ENCODE measurements at regions of chr7 and their contacts with region 1.

Region 1: GRCh38 chr7:3927446-3928110 is 626.5 kb downstream of the SDK1 start:
- DNase-seq: no peak
- H3K4me3 ChIP-seq: no peak overlapping the region
- H3K27ac ChIP-seq: no peak overlapping the region
- H3K4me1 ChIP-seq: no peaks in the 10 kb centered on the region
- H3K27me3 ChIP-seq: no peaks in the 10 kb centered on the region
- CTCF ChIP-seq: no peak
- POLR2A ChIP-seq: no peak

Region 2: GRCh38 chr7:3897438-3898385 is 29.9 kb before region 1 on chr7:
- intact Hi-C with region 1: loop called (anchors 2 kb)
- DNase-seq: no peak
- H3K4me3 ChIP-seq: no peak overlapping the region
- H3K27ac ChIP-seq: no peak overlapping the region
- H3K4me1 ChIP-seq: no peaks in the 10 kb centered on the region
- H3K27me3 ChIP-seq: no peaks in the 10 kb centered on the region
- CTCF ChIP-seq: peak; percentile 57 to 71 (median 63)
- POLR2A ChIP-seq: no peak

Region 3: DNA sequence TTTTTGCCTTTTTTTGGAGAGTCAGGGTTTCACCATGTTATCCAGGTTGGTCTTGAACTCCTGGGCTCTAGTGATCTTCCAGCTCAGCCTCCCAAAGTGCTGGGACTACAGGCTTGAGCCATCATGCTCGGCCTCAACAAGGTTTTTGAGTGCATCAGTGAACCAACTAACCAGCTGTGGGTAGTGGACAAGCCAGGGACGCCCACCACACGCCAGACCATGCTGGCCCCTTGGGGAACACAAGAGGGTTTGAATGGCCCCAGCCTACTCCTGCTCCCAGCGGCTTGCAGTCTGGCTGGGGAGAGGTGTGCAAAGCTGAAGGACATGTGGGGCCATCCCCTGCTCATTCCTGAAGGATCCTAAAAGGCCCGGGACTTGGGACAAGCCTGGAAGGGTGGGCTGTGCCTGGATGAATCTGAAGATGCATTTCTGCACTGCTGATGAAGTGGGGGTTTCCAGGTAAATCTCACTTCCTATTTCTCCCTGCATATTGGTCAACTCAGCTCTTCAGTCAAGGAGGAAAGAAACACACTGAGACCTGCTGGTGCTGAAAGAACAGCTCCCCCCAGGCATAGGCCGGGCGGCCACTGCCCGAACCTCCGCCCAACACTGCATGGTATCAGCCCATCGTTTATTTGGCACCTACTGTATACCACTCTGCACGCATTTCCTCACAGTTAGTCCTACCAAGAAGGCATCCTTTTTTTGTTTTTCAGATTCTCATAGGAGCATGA is 1024.5 kb after region 1 on chr7:
- intact Hi-C with region 1: loop called (anchors 5 kb)
- DNase-seq: no peak
- H3K4me3 ChIP-seq: no peak overlapping the region
- H3K27ac ChIP-seq: no peak overlapping the region
- H3K4me1 ChIP-seq: no peaks in the 10 kb centered on the region
- H3K27me3 ChIP-seq: peaks cover 0 to 13% of the 10 kb centered on the region in 2 donors
- CTCF ChIP-seq: no peak
- POLR2A ChIP-seq: no peak

Measured in breast epithelium (tissue), 4 donors.